AG04449 (cell line): ENCODE measurements at regions of chr11 and their contacts with region 1.

Region 1: DNA sequence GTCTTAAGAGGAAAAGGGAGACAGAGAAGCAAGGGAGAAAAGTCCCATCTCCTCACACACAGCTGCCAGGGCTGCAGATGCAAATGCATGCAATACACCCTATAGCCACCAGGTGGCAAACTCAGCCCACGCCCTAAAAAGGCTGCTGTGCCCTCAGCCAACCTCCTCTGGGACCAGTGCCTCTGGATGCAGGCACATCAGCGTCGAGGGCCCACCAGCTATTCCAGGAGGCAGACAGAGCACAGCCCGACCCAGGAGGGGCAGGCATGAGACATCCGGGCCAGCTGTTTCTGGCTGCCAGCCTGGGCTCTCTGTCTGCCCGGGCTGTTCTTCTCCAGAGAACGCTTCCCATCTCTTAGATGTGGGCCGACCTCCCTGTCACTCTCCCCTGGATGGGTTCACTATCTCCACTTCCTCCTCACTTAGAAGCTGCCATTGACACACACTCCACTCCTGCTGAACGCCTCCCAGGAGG is 39.7 kb downstream of the TPBGL start:
- DNase-seq: no peak
- H3K4me3 ChIP-seq: no peak overlapping the region
- CTCF ChIP-seq: peak; percentile 94

Region 2: GRCh38 chr11:75263944-75264349 is 16.3 kb before region 1 on chr11:
- CTCF ChIA-PET with region 1: interaction called, 67 read pairs
- POLR2A ChIA-PET with region 1: no interaction called
- DNase-seq: no peak
- H3K4me3 ChIP-seq: no peak overlapping the region
- CTCF ChIP-seq: no peak

Region 3: DNA sequence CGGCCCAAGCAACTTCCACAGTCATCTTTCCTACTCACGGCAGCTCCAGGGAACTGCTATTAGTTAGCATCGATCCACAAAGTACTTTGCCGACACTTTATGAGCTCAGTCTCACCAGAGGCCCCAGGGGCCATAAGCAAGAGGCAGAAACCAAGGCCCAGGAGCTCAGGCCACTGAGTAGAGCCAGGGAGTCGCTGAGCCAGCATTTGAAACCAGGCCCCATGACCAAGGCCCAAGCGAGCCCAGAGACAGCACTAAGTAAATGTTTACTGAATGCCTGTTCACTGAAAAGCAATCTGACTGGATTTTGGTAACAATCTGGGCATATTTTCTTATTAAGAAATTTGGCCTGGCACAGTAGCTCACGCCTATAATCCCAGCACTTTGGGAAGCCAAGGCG is 27.9 kb after region 1 on chr11:
- CTCF ChIA-PET with region 1: interaction called, 16 read pairs
- POLR2A ChIA-PET with region 1: no interaction called
- DNase-seq: no peak
- H3K4me3 ChIP-seq: no peak overlapping the region
- CTCF ChIP-seq: no peak

Region 4: GRCh38 chr11:75337195-75337654 is 57.0 kb after region 1 on chr11:
- CTCF ChIA-PET with region 1: interaction called, 10 read pairs
- POLR2A ChIA-PET with region 1: no interaction called
- DNase-seq: no peak
- H3K4me3 ChIP-seq: no peak overlapping the region
- CTCF ChIP-seq: no peak

Region 5: GRCh38 chr11:75399344-75400145 is 119.3 kb after region 1 on chr11 and contains the start of gene RPS3:
- CTCF ChIA-PET with region 1: interaction called, 12 read pairs
- POLR2A ChIA-PET with region 1: no interaction called
- DNase-seq: peak; percentile 50
- H3K4me3 ChIP-seq: peak within 1 kb of the TSS; percentile 97
- CTCF ChIP-seq: peak; percentile 6